ENCODE measurements at regions of chr6 and their contacts with region 1.

Region 1: GRCh38 chr6:43644931-43645612 is at the start of gene RSPH9:
- DNase-seq: peak; percentile 81
- CTCF ChIP-seq: no peak

Region 2: GRCh38 chr6:43657221-43657802 is 12.2 kb after region 1 on chr6:
- CTCF ChIA-PET with region 1: interaction called, 16 read pairs
- POLR2A ChIA-PET with region 1: interaction called, 7 read pairs
- DNase-seq: no peak
- CTCF ChIP-seq: no peak